Activated CD8-positive, alpha-beta T cell treated with anti-CD3 and anti-CD28 coated beads for 36 hours (primary cell): ENCODE measurements at regions of chr3 and their contacts with region 1.

Region 1: GRCh38 chr3:30681643-30682211 is 75.3 kb downstream of the TGFBR2 start:
- DNase-seq: no peak
- ATAC-seq: peak; percentile 34
- H3K4me3 Mint-ChIP-seq: peak overlapping the region; percentile 0
- H3K27ac Mint-ChIP-seq: peak overlapping the region; percentile 84
- H3K4me1 Mint-ChIP-seq: peaks cover 88% of the 10 kb centered on the region
- H3K27me3 Mint-ChIP-seq: no peaks in the 10 kb centered on the region
- CTCF ChIP-seq: no peak

Region 2: DNA sequence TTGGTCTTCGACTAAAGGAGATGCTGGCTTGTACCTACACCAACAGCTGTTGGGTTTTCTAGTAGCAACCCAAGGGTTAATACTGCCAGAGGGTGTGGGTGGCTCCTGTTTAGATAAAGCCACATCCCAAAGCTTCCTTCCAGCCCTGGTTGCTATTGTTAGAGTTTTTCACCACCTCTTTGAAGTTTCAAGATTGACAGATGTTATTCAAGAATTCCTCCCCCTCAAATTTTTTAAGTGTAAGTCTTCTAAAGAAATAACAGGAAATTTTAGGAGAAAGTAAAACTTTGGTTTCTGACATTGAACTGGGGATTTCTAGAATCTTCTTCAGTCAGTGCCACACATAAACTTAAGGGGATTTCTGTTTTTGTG is 14.5 kb before region 1 on chr3:
- CTCF ChIA-PET with region 1: interaction called, 5 read pairs
- POLR2A ChIA-PET with region 1: interaction called, 15 read pairs
- intact Hi-C with region 1: no loop called
- DNase-seq: peak; percentile 71
- ATAC-seq: peak; percentile 66
- H3K4me3 Mint-ChIP-seq: peak overlapping the region; percentile 14
- H3K27ac Mint-ChIP-seq: peak overlapping the region; percentile 92
- H3K4me1 Mint-ChIP-seq: peaks cover 92% of the 10 kb centered on the region
- H3K27me3 Mint-ChIP-seq: no peaks in the 10 kb centered on the region
- CTCF ChIP-seq: no peak

Region 3: GRCh38 chr3:30952786-30953185 is 271.1 kb after region 1 on chr3:
- CTCF ChIA-PET with region 1: no interaction called
- POLR2A ChIA-PET with region 1: no interaction called
- intact Hi-C with region 1: no loop called
- DNase-seq: no peak
- ATAC-seq: no peak
- H3K4me3 Mint-ChIP-seq: no peak overlapping the region
- H3K27ac Mint-ChIP-seq: no peak overlapping the region
- H3K4me1 Mint-ChIP-seq: no peaks in the 10 kb centered on the region
- H3K27me3 Mint-ChIP-seq: no peaks in the 10 kb centered on the region
- CTCF ChIP-seq: no peak